Right ventricle myocardium inferior (tissue), 1 donor: ENCODE measurements at regions of chr2 and their contacts with region 1.

Region 1: DNA sequence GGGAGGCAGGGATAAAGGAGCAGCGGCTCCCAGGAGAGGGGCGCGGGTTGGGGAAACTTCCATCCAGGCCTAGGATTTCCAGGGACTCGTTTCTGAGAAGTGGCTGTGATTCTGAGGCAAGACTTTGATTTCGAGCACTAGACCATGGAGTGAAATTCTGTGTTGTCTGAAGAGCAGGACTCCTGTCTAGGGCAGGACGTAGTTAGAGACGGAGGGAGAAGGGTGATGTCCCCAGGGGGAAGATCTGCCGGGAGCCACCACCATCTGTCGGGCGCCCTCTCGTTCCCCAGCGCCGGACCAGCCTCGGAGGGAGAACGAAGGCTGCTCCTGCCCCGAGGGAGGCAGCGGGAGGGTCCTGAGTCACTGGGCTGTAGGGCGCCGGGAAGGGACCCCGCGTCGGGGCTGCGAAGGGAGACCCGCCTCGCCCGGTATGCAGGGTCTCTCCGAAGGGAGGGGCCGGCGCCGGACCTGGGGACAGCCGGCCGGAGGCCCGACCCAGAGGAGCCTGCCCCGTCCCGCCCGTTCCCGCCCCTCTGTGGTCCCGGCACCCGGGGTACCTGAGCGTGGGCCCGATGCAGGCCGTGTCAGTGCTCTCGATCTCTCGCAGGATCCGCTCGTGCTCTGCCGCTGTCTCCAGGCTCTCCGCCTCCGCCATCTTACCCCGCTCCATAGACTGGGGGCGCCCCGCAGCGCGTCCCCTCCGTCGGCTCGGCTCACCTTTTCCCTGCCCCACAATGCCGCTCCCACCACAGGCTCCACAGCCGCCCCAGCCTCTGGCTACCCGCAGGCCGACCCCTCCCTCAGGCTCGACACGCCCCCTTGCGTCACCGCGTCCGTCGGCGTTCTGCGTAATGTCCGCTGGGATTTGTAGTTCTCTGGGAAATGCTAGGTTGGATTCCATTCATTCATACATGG is at the start of gene EXOC6B:
- DNase-seq: peak; percentile 95
- ATAC-seq: peak; percentile 97
- total RNA-seq, gene EXOC6B: 117 TPM

Region 2: DNA sequence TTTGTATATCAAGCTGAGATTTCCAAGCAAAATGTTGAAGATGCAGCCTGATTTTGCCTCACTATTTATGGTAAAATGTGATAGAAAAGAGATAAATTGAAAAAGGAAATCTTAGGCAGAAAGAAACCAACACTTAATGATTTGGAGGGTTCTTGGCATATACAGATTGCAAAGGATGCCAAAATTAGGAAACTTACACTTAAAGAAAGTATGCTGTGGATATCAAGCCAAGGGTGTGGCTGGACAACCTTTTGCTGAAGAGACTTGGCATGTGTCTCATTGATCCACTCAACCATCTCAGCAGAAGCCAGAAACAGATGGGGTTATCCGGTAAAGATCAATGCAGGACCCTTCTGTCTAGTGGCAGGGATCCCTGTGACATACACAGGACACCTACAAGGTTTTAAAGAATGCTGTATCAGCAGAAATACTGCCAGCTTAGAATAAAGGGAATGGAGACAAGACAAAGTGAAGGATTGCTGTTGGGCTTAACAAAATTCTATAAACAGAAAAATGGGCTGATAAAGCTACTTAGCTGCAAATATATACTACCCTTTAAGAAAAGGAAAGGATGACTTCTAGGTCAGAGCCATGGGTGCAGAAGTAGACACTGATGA is 570.6 kb before region 1 on chr2:
- intact Hi-C with region 1: no loop called
- DNase-seq: no peak
- ATAC-seq: no peak

Region 3: DNA sequence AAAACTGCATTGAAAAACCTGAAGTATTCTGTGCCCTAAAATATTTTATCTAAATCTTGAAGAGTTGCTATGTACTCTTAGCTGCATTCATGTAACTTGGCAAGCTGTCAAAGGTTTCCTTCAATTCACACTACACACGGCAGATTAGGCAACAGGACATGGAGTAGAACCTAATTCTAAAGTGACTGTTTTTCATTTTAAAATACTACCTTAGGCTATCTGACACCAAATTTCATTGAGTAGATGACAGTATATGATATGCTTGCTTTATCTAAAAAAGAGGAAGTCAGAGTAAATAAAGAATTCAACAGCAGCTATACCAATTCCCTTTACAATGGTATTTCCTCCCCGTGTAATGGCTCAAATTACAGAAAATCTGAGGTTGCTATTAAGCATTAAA is 45.0 kb before region 1 on chr2:
- intact Hi-C with region 1: loop called (anchors 5 kb)
- DNase-seq: no peak
- ATAC-seq: peak; percentile 57

Region 4: DNA sequence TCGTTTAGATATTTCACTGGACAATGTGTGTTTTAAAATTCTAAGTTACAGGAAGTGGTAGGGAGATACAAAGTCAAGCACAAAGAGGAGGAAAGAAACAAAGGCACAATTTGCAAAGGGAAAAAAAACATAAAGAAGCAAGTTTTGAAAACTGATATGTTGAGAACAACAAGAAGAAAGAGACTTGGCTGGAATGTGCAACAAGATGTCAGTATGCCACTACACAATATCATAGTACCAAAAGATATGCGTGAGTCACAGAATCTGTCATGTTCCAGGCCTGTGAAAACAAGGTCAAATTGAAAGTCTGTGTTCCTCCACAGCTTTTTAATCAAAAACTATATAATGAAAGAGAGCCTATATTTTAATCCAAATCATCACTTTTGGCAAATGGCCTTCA is 11.7 kb before region 1 on chr2:
- intact Hi-C with region 1: no loop called
- DNase-seq: no peak
- ATAC-seq: peak; percentile 59

Region 5: DNA sequence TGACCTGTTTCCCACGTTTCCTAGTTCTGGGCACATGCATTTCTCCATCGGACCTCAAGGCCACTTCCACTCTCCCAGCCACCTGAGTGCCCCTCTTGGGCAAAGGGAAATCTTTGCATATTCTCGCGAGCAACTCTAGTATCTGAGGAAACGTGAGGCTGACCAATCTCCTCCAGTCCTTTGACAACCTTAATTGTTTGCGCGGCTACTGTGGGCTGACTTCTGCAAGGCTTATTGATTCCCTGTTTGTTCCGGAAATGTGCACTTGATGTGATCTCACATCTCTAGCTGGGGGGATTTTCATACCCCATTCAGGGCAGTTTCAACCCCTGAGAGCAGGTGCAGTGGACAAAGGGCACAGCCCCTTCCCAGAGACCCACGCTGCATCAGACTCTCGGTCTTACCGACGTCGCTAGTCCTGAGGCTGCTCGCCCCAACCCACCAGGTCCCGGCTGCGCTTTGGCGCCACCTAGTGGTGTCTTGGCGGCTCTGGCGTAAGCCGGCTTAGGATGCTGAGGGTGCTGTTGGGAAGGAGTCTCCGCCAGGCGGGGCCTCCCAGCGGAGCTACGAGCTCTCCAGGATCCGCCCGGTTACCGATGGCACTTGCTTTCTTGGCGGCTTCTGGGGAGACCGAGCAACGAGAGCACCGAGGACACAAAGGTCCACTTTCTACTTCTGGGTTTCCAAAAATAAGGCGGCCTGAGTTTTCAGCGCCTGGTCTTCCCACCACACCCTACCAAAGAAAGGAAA is 36.9 kb after region 1 on chr2:
- intact Hi-C with region 1: loop called (anchors 5 kb)
- DNase-seq: peak; percentile 93
- ATAC-seq: peak; percentile 98